Esophagus squamous epithelium (tissue), 5 donors: ENCODE measurements at regions of chr6 and their contacts with region 1.

Region 1: DNA sequence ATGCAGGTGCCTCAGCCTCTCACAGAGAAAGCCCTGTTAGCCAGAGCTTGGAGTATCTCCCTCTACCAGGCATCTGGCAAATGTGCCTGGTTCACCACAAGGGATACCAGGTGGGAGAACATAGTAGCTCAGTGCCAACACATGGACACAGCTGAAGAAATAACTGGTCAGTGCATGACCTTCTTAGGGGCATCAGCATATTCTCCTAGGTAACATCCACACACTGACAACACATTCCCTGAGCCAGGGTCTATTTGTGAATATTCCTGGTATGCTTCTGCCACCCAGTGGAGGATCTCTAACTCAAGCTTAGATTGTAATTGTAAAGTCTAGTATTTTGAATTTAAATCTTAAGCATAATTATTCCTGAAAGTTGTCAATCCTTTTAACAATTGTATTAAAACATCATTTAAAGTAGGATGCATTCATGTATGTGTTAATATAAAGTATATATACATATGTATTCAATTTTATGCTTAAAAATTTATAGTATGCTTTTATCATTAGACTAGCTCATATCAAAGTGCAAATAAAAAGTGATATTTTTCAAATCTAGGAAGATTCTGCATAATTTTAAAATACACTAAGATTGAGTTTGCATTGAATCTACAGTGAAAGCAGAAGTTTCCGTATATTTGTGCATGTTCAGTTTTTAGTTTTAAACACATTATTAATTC is 45.3 kb upstream of the COL21A1 start:
- DNase-seq: no peak
- H3K4me3 ChIP-seq: no peak overlapping the region
- H3K27ac ChIP-seq: no peak overlapping the region
- H3K4me1 ChIP-seq: peaks cover 0 to 13% (median 3%) of the 10 kb centered on the region in 3 donors
- H3K27me3 ChIP-seq: no peaks in the 10 kb centered on the region
- CTCF ChIP-seq: peak in 5 of 6 experiments; percentile 50 to 76 (median 57)
- POLR2A ChIP-seq: no peak

Region 2: DNA sequence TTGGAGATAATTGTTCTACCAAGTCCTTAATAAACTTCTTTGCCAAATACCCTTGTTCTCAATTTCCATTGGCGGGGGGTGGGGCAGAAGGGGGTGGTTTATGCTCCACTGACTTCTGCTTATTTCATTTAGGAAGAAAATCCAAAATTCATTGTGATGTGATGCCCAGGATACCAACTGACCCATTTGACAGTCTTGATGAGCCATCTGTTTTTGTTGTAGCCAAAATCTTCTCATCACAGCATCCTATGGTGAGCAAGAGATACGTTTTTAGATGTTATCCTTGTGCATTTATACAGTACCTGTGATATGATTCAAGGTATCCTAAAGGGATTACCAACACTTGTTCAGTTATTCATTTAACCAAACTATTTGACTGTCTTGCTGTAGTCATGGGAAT is 308.8 kb before region 1 on chr6:
- intact Hi-C with region 1: loop called (anchors 2 kb)
- DNase-seq: no peak
- H3K4me3 ChIP-seq: no peak overlapping the region
- H3K27ac ChIP-seq: no peak overlapping the region
- H3K4me1 ChIP-seq: no peaks in the 10 kb centered on the region
- H3K27me3 ChIP-seq: no peaks in the 10 kb centered on the region
- CTCF ChIP-seq: no peak
- POLR2A ChIP-seq: no peak